ENCODE measurements at regions of chr9 and their contacts with region 1.

Region 1: DNA sequence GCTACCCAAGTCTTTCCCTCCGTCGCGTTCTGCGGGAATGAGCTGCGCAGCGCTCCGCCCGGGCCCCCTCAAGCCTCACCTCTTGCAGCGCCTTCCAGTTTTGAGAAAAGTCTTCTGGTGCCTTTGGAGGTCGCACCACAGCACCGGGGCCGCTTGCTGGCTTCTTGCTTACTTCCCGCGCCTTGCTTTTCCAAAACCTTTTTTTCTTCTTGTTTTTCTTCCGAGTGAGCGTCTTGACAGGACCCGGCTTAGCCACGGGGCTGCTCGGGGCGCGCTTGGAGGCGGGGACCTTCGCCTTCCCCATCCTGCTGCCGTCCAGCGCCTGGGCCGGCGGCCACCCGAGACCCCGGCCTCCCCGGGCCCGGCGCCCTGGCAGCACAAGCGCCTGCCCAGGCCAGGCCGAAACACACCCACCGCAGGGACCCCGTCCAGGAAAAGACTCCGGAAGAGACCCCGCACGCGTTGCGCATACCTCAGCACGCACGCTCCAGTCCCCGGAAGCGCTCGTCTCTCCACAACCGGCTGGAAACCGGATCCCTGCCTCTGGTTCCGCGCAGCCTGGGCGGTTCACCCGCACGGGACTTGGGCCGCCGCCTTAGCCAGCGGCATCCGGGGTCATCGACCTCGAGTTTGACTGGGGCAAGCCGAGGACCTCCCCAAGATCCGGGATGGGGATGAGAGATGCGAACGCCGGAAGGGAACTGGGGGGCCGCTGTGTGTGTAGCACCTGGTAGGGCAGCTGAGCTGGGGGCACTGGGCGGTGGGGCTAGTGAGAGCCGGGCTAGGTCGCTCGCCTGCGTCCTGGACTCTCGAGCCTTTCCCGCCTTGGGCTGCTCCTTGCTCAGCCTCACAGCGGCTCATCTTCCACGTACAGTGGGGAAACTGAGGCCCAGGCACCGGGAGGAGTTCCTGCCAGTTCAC is at the start of gene REXO4:
- DNase-seq: peak; percentile 86
- H3K4me3 Mint-ChIP-seq: peak within 1 kb of the TSS; percentile 93
- H3K27ac Mint-ChIP-seq: peak within 1 kb of the TSS; percentile 86
- H3K4me1 Mint-ChIP-seq: peaks cover 56% of the 10 kb centered on the region
- H3K27me3 Mint-ChIP-seq: no peaks in the 10 kb centered on the region
- total RNA-seq, gene REXO4: 42.5 and 43.8 TPM in 2 replicates

Region 2: DNA sequence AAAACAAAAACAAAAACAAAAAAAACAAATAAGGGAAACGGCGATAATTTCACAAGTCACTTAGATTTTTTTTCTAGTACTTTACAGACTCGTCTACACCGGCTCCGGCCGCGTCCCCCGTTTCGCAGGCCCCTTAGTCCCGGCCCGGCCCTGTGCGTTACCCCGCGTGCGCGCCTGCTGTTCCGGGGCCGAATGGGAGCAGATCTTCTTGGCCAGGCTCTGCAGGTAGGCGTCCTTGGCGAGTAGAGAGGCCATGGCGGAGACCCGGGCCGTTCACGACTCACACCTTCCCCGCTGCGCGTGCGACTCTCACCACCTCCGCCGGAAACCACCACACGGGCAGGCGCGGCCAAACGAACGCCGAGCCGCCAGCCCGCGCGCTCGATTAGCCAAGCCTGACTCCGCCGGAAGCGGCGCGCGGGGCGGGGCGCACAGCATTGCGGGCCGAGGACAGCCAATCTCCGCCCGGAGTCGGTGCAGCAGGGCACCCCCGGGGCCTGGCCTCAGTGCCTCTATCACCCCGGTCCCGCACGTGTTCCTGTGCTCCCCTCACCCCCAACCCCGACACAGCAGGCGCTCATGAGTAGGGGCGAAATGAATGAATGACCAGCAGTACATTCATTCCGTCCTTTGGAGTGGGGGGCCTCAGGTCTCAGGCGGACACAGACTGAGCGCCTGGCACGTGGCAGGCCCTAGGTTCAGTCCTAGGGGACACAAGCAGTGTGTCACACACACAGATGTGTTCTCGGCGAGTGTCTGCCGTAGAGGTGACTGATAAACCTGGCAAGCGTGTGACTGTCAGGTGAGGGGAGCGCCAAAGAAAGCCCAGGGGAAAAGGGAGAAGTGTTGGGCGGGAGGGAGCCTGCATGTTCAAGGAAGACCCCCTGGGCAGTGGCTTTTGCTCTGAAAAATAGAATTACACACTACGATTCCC is 81.7 kb before region 1 on chr9 and contains the start of gene SURF6:
- intact Hi-C with region 1: loop called (anchors 1 kb)
- DNase-seq: peak; percentile 94
- H3K4me3 Mint-ChIP-seq: peak within 1 kb of the TSS; percentile 96
- H3K27ac Mint-ChIP-seq: peak within 1 kb of the TSS; percentile 88
- H3K4me1 Mint-ChIP-seq: peaks cover 16% of the 10 kb centered on the region
- H3K27me3 Mint-ChIP-seq: no peaks in the 10 kb centered on the region
- total RNA-seq, gene SURF6: 29.0 and 29.8 TPM in 2 replicates

Region 3: GRCh38 chr9:133406480-133407307 is 11.1 kb before region 1 on chr9:
- intact Hi-C with region 1: loop called (anchors 1 kb)
- DNase-seq: peak; percentile 67
- H3K4me3 Mint-ChIP-seq: no peak overlapping the region
- H3K27ac Mint-ChIP-seq: peak overlapping the region; percentile 82
- H3K4me1 Mint-ChIP-seq: peaks cover 9% of the 10 kb centered on the region
- H3K27me3 Mint-ChIP-seq: no peaks in the 10 kb centered on the region

Region 4: GRCh38 chr9:133992780-133993634 is 575.2 kb after region 1 on chr9:
- intact Hi-C with region 1: loop called (anchors 5 kb)
- DNase-seq: peak; percentile 49
- H3K4me3 Mint-ChIP-seq: peak overlapping the region; percentile 72
- H3K27ac Mint-ChIP-seq: no peak overlapping the region
- H3K4me1 Mint-ChIP-seq: no peaks in the 10 kb centered on the region
- H3K27me3 Mint-ChIP-seq: peaks cover 19% of the 10 kb centered on the region

Region 5: GRCh38 chr9:134163353-134164196 is 745.8 kb after region 1 on chr9:
- intact Hi-C with region 1: loop called (anchors 2 kb)
- DNase-seq: peak; percentile 61
- H3K4me3 Mint-ChIP-seq: no peak overlapping the region
- H3K27ac Mint-ChIP-seq: no peak overlapping the region
- H3K4me1 Mint-ChIP-seq: peaks cover 10% of the 10 kb centered on the region
- H3K27me3 Mint-ChIP-seq: no peaks in the 10 kb centered on the region

Measured in activated T-helper 1 cell treated with anti-CD3 and anti-CD28 coated beads, Interleukin-12 subunit alpha, Interleukin-12 subunit beta, Interleukin-2, Interleukin-4 antibody, amounts not matched to agents 30 ng/mL and 10 ng/mL and 1 ng/mL, durations not matched to agents 14 hours and 24 hours and 36 hours (primary cell).